GM12878 (cell line): ENCODE measurements at regions of chr5 and their contacts with region 1.

Region 1: GRCh38 chr5:141564216-141564692 is 54.5 kb downstream of the DIAPH1 start:
- DNase-seq: peak; percentile 84
- ATAC-seq: peak; percentile 99
- H3K4me3 ChIP-seq: no peak overlapping the region
- H3K27ac ChIP-seq: peak overlapping the region; percentile 62; the same call in 1 of the 2 replicates
- H3K4me1 ChIP-seq: no peaks in the 10 kb centered on the region
- H3K27me3 ChIP-seq: no peaks in the 10 kb centered on the region
- CTCF ChIP-seq: peak; percentile 64 to 97 (median 93)
- EP300 ChIP-seq: no peak
- POLR2A ChIP-seq: no peak
- RAD21 ChIP-seq: peak; percentile 66

Region 2: DNA sequence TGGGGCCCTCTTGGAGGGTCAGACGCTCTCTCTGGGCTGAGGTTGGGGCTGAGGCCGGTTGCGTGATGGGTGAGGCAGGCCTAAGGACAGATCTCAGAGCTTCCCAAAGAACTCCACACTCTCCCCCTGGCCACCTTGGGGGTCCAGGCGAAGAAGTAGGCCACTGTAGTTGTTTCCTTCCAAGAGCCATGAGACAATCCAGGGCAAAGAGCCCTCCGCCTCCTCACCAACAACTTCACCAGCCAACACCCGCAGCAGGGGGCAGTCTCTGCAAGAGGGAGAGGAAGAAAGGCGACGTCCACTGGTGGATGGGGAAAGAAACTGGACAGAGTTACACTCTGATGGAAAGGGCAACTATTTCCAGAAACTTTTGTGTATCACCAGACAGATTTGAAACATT is 988.9 kb before region 1 on chr5:
- CTCF ChIA-PET with region 1: no interaction called
- POLR2A ChIA-PET with region 1: no interaction called
- RAD21 ChIA-PET with region 1: no interaction called
- SMC1A ChIA-PET with region 1: no interaction called
- in situ Hi-C with region 1: no loop called
- intact Hi-C with region 1: no loop called
- DNase-seq: no peak
- ATAC-seq: no peak
- H3K4me3 ChIP-seq: no peak overlapping the region
- H3K27ac ChIP-seq: no peak overlapping the region
- H3K4me1 ChIP-seq: no peaks in the 10 kb centered on the region
- H3K27me3 ChIP-seq: no peaks in the 10 kb centered on the region
- CTCF ChIP-seq: no peak
- EP300 ChIP-seq: no peak
- POLR2A ChIP-seq: no peak
- RAD21 ChIP-seq: 0 out of 2 replicates have a peak, but pooled peaks have one; percentile 6

Region 3: DNA sequence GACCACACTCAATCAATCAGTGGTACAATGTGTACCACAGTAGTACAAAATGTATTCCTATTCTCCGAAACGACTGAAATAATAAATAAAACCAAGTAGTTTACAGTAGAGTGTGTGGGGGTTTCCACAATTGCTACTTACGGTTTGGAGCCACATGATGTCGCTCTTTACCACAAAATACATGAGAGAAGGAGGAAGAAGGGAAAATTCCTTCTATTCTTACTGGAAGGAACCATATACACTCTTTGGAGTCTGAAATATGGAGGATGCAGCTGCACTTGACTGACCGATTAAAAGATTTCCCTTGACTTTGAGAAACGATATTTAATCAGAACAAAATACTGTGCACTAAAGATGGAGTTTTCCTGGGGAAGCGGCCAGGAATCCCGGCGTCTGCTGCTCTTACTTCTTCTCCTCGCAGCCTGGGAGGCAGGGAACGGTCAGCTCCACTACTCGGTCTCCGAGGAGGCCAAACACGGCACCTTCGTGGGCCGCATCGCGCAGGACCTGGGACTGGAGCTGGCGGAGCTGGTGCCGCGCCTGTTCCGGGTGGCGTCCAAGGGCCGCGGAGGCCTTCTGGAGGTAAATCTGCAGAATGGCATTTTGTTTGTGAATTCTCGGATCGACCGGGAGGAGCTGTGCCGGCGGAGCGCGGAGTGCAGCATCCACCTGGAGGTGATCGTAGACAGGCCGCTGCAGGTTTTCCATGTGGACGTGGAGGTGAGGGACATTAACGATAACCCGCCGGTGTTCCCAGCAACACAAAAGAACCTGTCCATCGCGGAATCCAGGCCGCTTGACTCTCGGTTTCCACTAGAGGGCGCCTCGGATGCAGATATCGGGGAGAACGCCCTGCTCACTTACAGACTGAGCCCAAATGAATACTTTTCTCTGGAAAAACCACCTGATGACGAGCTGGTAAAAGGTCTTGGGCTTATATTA is 757.1 kb before region 1 on chr5 and contains the start of gene PCDHA4:
- CTCF ChIA-PET with region 1: no interaction called
- POLR2A ChIA-PET with region 1: no interaction called
- RAD21 ChIA-PET with region 1: no interaction called
- SMC1A ChIA-PET with region 1: no interaction called
- in situ Hi-C with region 1: loop called (anchors 25 kb)
- intact Hi-C with region 1: no loop called
- DNase-seq: no peak
- ATAC-seq: no peak
- H3K4me3 ChIP-seq: no peak within 1 kb of the TSS
- H3K27ac ChIP-seq: no peak within 1 kb of the TSS
- H3K4me1 ChIP-seq: no peaks in the 10 kb centered on the region
- H3K27me3 ChIP-seq: no peaks in the 10 kb centered on the region
- CTCF ChIP-seq: peak in 2 of 3 experiments; percentile 13 to 15; a peak in 1 of 6 replicates
- EP300 ChIP-seq: no peak
- POLR2A ChIP-seq: no peak
- RAD21 ChIP-seq: no peak
- polyA plus RNA-seq, gene PCDHA4: not detected

Region 4: DNA sequence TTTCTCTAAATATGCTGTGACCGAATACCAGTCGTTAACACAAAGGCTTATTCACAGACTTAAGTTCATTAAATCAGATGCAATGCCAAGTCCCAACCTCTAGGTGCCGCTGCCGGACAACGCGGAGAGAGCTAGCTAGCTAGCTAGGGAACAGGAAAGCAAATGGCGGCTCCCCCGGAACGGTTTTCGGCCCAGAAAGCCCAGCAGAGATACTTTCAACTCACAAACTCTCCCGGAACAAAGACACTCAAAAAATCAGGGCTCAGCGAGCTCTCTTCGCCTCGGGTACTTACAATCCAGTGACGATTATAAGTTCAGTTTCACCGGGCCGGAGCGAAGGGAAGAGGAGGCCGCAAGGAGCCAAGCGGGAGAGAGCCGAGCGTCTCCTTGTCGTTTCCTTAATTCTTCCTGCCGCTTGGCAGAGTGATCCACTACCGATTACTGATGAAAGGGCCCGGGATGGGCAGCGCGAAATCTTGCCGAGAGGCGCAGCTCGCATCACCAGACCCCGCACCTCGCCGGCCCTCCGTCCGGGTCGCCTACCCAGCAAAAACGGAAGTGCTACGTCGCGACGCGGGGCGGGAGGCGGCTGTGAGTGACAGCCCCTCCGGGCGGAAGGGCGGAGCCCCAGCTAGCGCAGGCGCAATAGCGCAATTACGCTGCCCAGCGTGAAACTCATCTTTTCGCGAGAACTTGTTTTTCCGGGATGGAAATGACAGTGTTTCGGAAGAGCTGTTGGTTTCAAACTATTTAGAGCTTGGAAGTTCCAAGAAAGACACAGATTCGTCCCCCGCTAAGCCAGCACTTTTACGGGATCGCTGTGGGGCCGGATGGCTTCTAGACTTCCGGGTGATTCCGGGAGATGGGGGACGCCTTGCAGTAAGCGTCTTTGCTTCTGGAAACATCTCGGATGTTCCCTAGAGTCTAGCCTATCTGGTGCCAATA is 243.8 kb before region 1 on chr5 and contains the start of gene TAF7:
- CTCF ChIA-PET with region 1: interaction called, 21 read pairs
- POLR2A ChIA-PET with region 1: no interaction called
- RAD21 ChIA-PET with region 1: interaction called, 17 read pairs
- SMC1A ChIA-PET with region 1: interaction called, 4 read pairs
- in situ Hi-C with region 1: loop called (anchors 10 kb)
- intact Hi-C with region 1: loop called (anchors 2 kb)
- DNase-seq: peak; percentile 72
- ATAC-seq: peak; percentile 96
- H3K4me3 ChIP-seq: peak within 1 kb of the TSS; percentile 81
- H3K27ac ChIP-seq: peak within 1 kb of the TSS; percentile 96
- H3K4me1 ChIP-seq: no peaks in the 10 kb centered on the region
- H3K27me3 ChIP-seq: no peaks in the 10 kb centered on the region
- CTCF ChIP-seq: peak; percentile 81 to 93 (median 90)
- EP300 ChIP-seq: no peak
- POLR2A ChIP-seq: peak; percentile 99
- RAD21 ChIP-seq: peak; percentile 70
- polyA plus RNA-seq, gene TAF7: 43.2 to 69.1 TPM

Region 5: GRCh38 chr5:141420855-141421496 is 143.3 kb before region 1 on chr5 and contains the start of gene PCDHGA11:
- CTCF ChIA-PET with region 1: interaction called, 245 read pairs
- POLR2A ChIA-PET with region 1: interaction called, 8 read pairs
- RAD21 ChIA-PET with region 1: interaction called, 31 read pairs
- SMC1A ChIA-PET with region 1: interaction called, 67 read pairs
- in situ Hi-C with region 1: loop called (anchors 5 kb)
- intact Hi-C with region 1: loop called (anchors 1 kb)
- DNase-seq: peak; percentile 37
- ATAC-seq: peak; percentile 77
- H3K4me3 ChIP-seq: peak within 1 kb of the TSS; percentile 76
- H3K27ac ChIP-seq: no peak within 1 kb of the TSS
- H3K4me1 ChIP-seq: peaks cover 4% of the 10 kb centered on the region; the same call in 1 of the 2 replicates
- H3K27me3 ChIP-seq: no peaks in the 10 kb centered on the region; a peak in 1 of 4 replicates
- CTCF ChIP-seq: peak; percentile 83 to 89 (median 89)
- EP300 ChIP-seq: no peak
- POLR2A ChIP-seq: no peak
- RAD21 ChIP-seq: peak; percentile 82
- polyA plus RNA-seq, gene PCDHGA11: 0.21 to 0.31 TPM

Region 6: DNA sequence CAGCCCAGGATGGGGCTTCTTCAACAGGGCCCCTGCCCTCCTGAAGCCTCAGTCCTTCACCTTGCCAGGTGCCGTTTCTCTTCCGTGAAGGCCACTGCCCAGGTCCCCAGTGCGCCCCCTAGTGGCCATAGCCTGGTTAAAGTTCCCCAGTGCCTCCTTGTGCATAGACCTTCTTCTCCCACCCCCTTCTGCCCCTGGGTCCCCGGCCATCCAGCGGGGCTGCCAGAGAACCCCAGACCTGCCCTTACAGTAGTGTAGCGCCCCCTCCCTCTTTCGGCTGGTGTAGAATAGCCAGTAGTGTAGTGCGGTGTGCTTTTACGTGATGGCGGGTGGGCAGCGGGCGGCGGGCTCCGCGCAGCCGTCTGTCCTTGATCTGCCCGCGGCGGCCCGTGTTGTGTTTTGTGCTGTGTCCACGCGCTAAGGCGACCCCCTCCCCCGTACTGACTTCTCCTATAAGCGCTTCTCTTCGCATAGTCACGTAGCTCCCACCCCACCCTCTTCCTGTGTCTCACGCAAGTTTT is 51.8 kb before region 1 on chr5:
- CTCF ChIA-PET with region 1: interaction called, 46 read pairs
- POLR2A ChIA-PET with region 1: no interaction called
- RAD21 ChIA-PET with region 1: interaction called, 10 read pairs
- SMC1A ChIA-PET with region 1: interaction called, 19 read pairs
- in situ Hi-C with region 1: no loop called
- intact Hi-C with region 1: no loop called
- DNase-seq: no peak
- ATAC-seq: peak; percentile 44
- H3K4me3 ChIP-seq: peak overlapping the region; percentile 69
- H3K27ac ChIP-seq: peak overlapping the region; percentile 90
- H3K4me1 ChIP-seq: peaks cover 76% of the 10 kb centered on the region
- H3K27me3 ChIP-seq: no peaks in the 10 kb centered on the region
- CTCF ChIP-seq: peak; percentile 81 to 94 (median 89)
- EP300 ChIP-seq: no peak
- POLR2A ChIP-seq: no peak; the same call in 1 of the 2 replicates
- RAD21 ChIP-seq: peak; percentile 69

Region 7: GRCh38 chr5:141598391-141599350 is 34.4 kb after region 1 on chr5:
- CTCF ChIA-PET with region 1: interaction called, 33 read pairs
- POLR2A ChIA-PET with region 1: no interaction called
- RAD21 ChIA-PET with region 1: no interaction called
- SMC1A ChIA-PET with region 1: interaction called, 3 read pairs
- in situ Hi-C with region 1: no loop called
- intact Hi-C with region 1: no loop called
- DNase-seq: no peak
- ATAC-seq: peak; percentile 68
- H3K4me3 ChIP-seq: no peak overlapping the region
- H3K27ac ChIP-seq: no peak overlapping the region; the same call in 1 of the 2 replicates
- H3K4me1 ChIP-seq: peaks cover 11% of the 10 kb centered on the region
- H3K27me3 ChIP-seq: no peaks in the 10 kb centered on the region
- CTCF ChIP-seq: no peak
- EP300 ChIP-seq: no peak
- POLR2A ChIP-seq: no peak
- RAD21 ChIP-seq: no peak

Region 8: GRCh38 chr5:141636413-141637122 is 72.3 kb after region 1 on chr5 and contains the starts of genes HDAC3 and RELL2:
- CTCF ChIA-PET with region 1: interaction called, 28 read pairs
- POLR2A ChIA-PET with region 1: interaction called, 3 read pairs
- RAD21 ChIA-PET with region 1: interaction called, 4 read pairs
- SMC1A ChIA-PET with region 1: interaction called, 9 read pairs
- in situ Hi-C with region 1: no loop called
- intact Hi-C with region 1: no loop called
- DNase-seq: no peak
- ATAC-seq: peak; percentile 86
- H3K4me3 ChIP-seq: peak within 1 kb of the TSS; percentile 85
- H3K27ac ChIP-seq: peak within 1 kb of the TSS; percentile 86
- H3K4me1 ChIP-seq: peaks cover 41% of the 10 kb centered on the region
- H3K27me3 ChIP-seq: no peaks in the 10 kb centered on the region
- CTCF ChIP-seq: no peak
- EP300 ChIP-seq: no peak
- POLR2A ChIP-seq: peak; percentile 72
- RAD21 ChIP-seq: no peak
- polyA plus RNA-seq, gene HDAC3: 62.2 to 108 TPM
- polyA plus RNA-seq, gene RELL2: 0.23 to 0.64 TPM

Region 9: DNA sequence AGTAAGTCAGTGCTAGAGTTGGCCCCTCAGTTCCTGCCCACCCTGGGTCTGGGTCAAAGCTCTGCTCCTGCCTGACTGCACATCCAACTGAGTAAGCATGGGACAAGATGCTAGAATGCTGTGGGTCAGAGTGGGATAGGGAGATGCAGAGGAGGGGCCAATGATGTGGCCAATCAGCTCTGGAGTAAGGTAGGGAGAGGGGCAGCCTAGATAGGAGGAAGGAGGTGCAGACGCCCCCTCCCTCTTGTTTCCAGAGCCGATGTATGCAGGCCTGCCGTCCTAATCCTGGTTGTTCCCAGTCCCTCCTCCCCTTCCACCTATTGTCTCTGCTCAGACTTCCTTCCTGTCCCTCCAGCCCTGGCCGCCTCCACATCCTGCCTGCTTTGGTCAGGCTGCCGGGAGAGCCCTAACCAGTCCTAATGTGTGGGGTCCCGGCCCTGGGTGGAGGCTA is 116.5 kb after region 1 on chr5:
- CTCF ChIA-PET with region 1: no interaction called
- POLR2A ChIA-PET with region 1: no interaction called
- RAD21 ChIA-PET with region 1: no interaction called
- SMC1A ChIA-PET with region 1: no interaction called
- in situ Hi-C with region 1: no loop called
- intact Hi-C with region 1: no loop called
- DNase-seq: no peak
- ATAC-seq: no peak; the same call in 2 of the 3 replicates
- H3K4me3 ChIP-seq: no peak overlapping the region
- H3K27ac ChIP-seq: no peak overlapping the region
- H3K4me1 ChIP-seq: no peaks in the 10 kb centered on the region
- H3K27me3 ChIP-seq: peaks cover 2 to 12% of the 10 kb centered on the region in 2 experiments
- CTCF ChIP-seq: no peak
- EP300 ChIP-seq: no peak
- POLR2A ChIP-seq: no peak
- RAD21 ChIP-seq: no peak

Region 10: GRCh38 chr5:142548739-142549275 is 984.6 kb after region 1 on chr5:
- CTCF ChIA-PET with region 1: no interaction called
- POLR2A ChIA-PET with region 1: no interaction called
- RAD21 ChIA-PET with region 1: no interaction called
- SMC1A ChIA-PET with region 1: no interaction called
- in situ Hi-C with region 1: no loop called
- intact Hi-C with region 1: no loop called
- DNase-seq: peak; percentile 12
- ATAC-seq: peak; percentile 78
- H3K4me3 ChIP-seq: no peak overlapping the region
- H3K27ac ChIP-seq: no peak overlapping the region
- H3K4me1 ChIP-seq: no peaks in the 10 kb centered on the region
- H3K27me3 ChIP-seq: peaks cover 0 to 6% of the 10 kb centered on the region in 2 experiments; a peak in 2 of 4 replicates
- CTCF ChIP-seq: peak; percentile 46 to 53 (median 50); a peak in 5 of 6 replicates
- EP300 ChIP-seq: no peak
- POLR2A ChIP-seq: no peak
- RAD21 ChIP-seq: peak; percentile 31